ENCODE measurements at regions of chr7 and their contacts with region 1.

Region 1: DNA sequence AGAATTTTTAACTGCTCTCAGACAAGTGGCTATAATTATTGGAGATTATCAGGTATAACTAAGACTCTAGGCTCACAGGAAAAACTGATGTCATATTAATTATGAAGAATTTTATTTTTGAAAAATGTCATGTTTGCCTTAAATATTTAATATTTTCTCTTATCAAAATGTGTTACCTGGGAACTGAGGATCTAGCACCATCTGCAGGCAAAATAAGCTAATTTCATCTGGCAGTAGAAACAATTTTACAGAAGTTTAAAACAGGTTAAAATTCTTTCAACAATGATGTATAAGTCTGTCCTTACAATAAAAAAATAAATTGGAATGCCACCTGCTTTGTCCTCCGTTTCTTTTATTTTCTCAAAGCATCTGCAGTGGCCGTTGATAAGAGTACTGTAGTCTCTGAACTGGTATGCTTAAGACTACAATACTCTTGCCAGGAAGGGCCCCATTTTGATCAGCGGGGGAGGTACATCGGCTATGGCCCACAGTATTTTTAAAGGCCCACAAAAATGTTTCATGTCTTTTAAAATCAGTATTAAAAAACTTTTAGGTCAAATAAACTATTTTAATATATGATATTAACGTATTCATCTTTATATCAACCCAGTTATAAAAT is 81.3 kb downstream of the VWDE start:
- DNase-seq: no peak
- H3K4me3 ChIP-seq: no peak overlapping the region
- H3K27ac ChIP-seq: no peak overlapping the region
- H3K27me3 ChIP-seq: no peaks in the 10 kb centered on the region
- CTCF ChIP-seq: peak; percentile 67

Region 2: GRCh38 chr7:11835260-11835659 is 487.1 kb before region 1 on chr7:
- CTCF ChIA-PET with region 1: interaction called, 12 read pairs
- POLR2A ChIA-PET with region 1: no interaction called
- DNase-seq: no peak
- H3K4me3 ChIP-seq: no peak overlapping the region
- H3K27ac ChIP-seq: no peak overlapping the region
- H3K27me3 ChIP-seq: no peaks in the 10 kb centered on the region
- CTCF ChIP-seq: peak; percentile 37

Region 3: DNA sequence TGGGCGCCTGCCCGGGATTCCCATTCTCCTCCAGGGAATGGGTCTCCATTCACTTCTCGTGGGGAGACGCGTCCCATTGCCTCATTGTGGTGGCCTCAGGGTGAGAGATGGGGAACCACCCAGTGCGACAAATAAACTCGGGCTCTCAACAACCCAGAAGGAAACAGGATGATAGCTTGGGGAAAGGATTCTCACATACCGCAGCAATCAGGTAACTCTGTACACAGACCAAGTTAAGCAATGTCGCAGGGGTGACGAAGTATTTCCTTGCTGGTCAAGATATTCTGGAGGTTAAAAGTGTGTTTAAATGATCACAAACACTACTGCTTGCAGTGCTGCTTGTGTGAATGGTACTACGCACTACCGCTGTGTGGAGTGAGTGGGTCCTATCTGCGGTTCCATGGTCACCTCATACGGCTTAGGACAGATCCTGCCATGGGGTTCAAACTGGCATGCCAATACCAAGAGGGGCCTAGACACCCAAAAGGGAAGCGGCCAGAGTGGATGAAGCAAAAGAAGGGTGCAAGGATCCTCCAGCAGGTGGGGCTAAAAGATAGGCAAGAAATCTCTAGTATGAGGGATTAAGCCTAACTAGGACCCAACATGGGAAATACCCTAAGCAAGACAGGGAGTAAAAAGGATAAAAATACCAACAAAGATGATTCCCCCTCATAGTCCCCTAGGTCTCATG is 255.1 kb before region 1 on chr7:
- CTCF ChIA-PET with region 1: interaction called, 26 read pairs
- POLR2A ChIA-PET with region 1: no interaction called
- DNase-seq: peak; percentile 46
- H3K4me3 ChIP-seq: no peak overlapping the region
- H3K27ac ChIP-seq: no peak overlapping the region
- H3K27me3 ChIP-seq: no peaks in the 10 kb centered on the region
- CTCF ChIP-seq: peak; percentile 91

Measured in AG04450 (cell line).